Gastrocnemius medialis (tissue), 4 donors: ENCODE measurements at regions of chr15 and their contacts with region 1.

Region 1: DNA sequence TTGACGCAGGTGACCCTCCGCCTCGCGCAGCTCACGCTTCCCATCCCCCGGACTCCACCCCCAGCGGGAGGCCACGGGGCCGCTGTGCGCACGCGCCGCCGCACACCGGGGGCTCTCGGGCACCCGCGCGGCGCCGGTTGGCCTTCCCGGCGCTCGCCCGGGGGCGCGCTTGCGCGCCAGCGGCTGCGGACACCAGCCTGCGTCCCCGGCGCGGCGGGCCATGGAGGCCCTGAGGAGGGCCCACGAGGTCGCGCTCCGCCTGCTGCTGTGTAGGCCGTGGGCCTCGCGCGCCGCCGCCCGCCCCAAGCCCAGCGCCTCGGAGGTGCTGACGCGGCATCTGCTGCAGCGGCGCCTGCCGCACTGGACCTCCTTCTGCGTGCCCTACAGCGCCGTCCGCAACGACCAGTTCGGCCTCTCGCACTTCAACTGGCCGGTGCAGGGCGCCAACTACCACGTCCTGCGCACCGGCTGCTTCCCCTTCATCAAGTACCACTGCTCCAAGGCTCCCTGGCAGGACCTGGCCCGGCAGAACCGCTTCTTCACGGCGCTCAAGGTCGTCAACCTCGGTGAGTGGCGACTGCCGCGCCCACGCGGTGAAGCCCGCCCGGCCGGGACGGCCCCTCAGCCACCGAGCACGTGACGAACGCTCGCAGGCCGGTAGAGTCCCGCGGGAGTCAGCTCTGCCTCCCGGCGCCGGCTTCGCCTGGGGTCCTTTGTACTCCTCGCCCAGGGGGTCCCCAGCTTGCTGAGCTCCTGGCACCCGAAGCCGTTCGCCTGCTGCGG is at the start of gene C15orf61:
- DNase-seq: peak; percentile 90 to 94
- ATAC-seq: peak; percentile 75 to 77
- H3K4me3 ChIP-seq: peak within 1 kb of the TSS; percentile 83 to 94 (median 91)
- H3K27ac ChIP-seq: peak within 1 kb of the TSS; percentile 99 to 100 (median 99)
- H3K4me1 ChIP-seq: peaks cover 28 to 42% of the 10 kb centered on the region in 2 donors
- H3K27me3 ChIP-seq: no peaks in the 10 kb centered on the region
- CTCF ChIP-seq: no peak
- POLR2A ChIP-seq: peak; percentile 95 to 97
- total RNA-seq, gene C15orf61: 10.2 to 25.9 (median 15.8) TPM

Region 2: GRCh38 chr15:67065444-67066093 is 455.7 kb before region 1 on chr15 and contains the start of gene SMAD3:
- in situ Hi-C with region 1: no loop called
- intact Hi-C with region 1: loop called (anchors 5 kb)
- DNase-seq: peak; percentile 87 to 90
- ATAC-seq: peak; percentile 61 to 71
- H3K4me3 ChIP-seq: peak within 1 kb of the TSS; percentile 71 to 98 (median 84)
- H3K27ac ChIP-seq: peak within 1 kb of the TSS; percentile 91 to 98 (median 94)
- H3K4me1 ChIP-seq: peaks cover 32 to 36% of the 10 kb centered on the region in 2 donors
- H3K27me3 ChIP-seq: no peaks in the 10 kb centered on the region
- CTCF ChIP-seq: peak in 1 of 5 experiments; percentile 4
- POLR2A ChIP-seq: peak; percentile 95 to 97
- total RNA-seq, gene SMAD3: 15.9 to 61.7 (median 26.3) TPM

Region 3: GRCh38 chr15:67335534-67336221 is 185.5 kb before region 1 on chr15:
- in situ Hi-C with region 1: no loop called
- intact Hi-C with region 1: no loop called
- DNase-seq: no peak
- ATAC-seq: no peak
- H3K4me3 ChIP-seq: no peak overlapping the region
- H3K27ac ChIP-seq: no peak overlapping the region
- H3K4me1 ChIP-seq: peaks cover 0 to 8% of the 10 kb centered on the region in 2 donors
- H3K27me3 ChIP-seq: no peaks in the 10 kb centered on the region
- CTCF ChIP-seq: no peak
- POLR2A ChIP-seq: no peak

Region 4: DNA sequence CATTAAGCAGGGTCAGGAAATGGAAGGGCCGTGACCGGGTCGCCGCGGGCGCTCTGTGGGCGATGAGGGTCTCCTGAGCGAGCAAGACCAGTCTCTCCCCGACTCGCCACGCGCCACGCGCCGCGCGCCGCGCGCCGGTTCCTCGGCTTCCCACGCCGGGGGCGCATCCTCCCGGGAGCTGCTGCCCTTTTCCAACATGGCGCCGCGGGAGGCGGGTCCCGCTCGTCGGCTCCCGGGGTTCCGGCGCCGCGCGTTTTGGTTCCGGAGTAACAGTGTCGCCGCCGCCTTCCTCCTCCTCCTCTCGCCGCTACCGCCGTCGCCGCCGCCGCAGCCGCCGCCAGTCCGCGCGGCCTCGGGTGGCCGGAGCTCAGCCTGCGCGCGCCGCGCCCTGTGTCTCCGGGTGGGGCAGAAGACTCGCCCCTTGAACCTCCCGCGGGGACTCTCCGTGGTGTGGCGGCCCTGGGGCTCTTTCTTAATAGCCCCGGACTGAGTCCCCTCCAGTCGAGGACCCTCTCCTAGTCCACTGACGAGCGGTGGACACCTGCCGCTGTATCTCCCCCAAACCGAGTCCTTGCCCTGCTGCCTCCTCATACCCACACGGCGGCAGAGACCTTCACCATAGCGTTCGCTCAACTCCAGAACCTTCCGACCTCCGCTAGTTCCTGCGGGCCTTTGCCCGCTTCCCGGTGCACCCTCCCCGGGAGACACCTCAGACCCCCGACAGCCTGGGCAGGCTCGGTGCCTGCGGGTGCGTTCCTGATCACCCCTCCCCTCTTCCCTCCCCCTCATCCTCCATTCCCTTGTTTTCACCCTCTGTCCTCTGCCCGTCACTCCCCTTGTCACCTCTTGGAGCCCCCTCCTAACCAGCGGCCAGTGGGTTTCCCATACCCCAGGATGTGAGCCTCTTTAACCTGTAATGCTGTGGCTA is 21.5 kb after region 1 on chr15 and contains the start of gene MAP2K5:
- in situ Hi-C with region 1: no loop called
- intact Hi-C with region 1: loop called (anchors 2 kb)
- DNase-seq: peak; percentile 74 to 79
- ATAC-seq: peak; percentile 86 to 89
- H3K4me3 ChIP-seq: peak within 1 kb of the TSS; percentile 66 to 90 (median 78)
- H3K27ac ChIP-seq: peak within 1 kb of the TSS; percentile 86 to 93 (median 88)
- H3K4me1 ChIP-seq: peaks cover 10 to 19% of the 10 kb centered on the region in 2 donors
- H3K27me3 ChIP-seq: no peaks in the 10 kb centered on the region
- CTCF ChIP-seq: no peak
- POLR2A ChIP-seq: peak; percentile 78 to 79
- total RNA-seq, gene MAP2K5: 5.9 to 6.8 (median 6.4) TPM